ENCODE measurements at regions of chr6 and their contacts with region 1.

Region 1: DNA sequence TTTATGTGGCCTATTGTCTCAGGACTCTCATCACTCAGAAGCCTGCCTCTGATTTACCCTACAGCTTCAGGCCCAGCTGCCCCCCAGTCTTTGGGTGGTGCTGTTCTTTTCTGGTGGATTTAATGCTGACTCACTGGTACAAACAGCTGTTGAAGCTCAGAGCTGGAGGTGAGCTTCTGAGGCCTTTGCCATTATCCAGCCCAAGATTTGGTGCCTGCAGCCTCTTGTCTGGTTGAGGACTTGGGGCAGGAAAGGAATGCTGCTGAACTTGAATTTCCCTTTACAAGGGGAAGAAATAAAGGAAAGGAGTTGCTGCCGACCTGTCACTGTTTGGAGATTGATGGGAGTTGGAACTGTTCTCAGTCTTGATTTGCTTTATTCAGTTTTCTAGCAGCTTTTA is 19.8 kb downstream of the ABCF1 start:
- DNase-seq: peak; percentile 86 to 98
- H3K4me3 ChIP-seq: no peak overlapping the region
- H3K27ac ChIP-seq: peak overlapping the region; percentile 84
- H3K4me1 ChIP-seq: peaks cover 47% of the 10 kb centered on the region
- H3K27me3 ChIP-seq: no peaks in the 10 kb centered on the region
- CTCF ChIP-seq: no peak

Region 2: DNA sequence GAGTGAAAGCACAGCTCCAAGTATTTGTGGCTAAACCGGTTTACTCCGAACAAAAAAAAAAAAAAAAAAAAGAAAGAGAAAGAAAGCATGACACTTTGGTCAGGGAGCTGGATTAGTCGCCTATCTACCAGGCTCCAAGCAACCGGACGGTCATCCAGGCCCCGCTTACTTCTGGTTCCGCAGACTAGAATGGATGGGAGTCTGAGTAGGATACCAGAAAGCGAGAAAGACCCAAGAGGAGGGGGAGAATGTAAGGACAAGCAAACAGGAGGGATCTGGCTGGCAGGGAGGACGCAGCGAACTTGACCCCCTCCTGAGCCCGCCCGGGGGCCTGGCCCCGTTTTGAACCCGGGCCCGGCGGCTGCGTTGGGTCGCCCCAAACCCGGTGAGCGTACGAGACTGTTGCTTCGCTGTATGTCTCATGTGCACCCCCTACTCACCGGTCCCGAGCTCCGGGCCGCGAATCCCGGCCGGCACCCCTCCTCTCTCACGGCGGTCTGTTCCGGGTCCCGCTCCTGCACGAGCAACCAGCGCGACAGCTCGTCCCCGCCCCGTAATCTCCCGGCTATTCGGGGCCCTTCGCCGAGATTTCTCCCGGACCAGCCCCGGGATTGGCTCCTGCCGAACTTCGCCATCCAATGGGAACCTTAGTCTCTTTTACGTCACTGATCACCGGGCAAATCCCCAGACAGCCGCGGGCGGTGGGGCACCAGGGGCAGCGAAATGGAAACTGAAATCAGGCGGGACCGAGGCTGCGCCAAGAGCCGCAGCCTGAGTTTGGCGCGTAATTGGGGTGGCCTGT is 377.9 kb before region 1 on chr6 and contains the start of gene TRIM26:
- CTCF ChIA-PET with region 1: no interaction called
- POLR2A ChIA-PET with region 1: interaction called, 23 read pairs
- intact Hi-C with region 1: no loop called
- DNase-seq: peak; percentile 94 to 99
- H3K4me3 ChIP-seq: peak within 1 kb of the TSS; percentile 95
- H3K27ac ChIP-seq: peak within 1 kb of the TSS; percentile 83
- H3K4me1 ChIP-seq: peaks cover 27% of the 10 kb centered on the region
- H3K27me3 ChIP-seq: no peaks in the 10 kb centered on the region
- CTCF ChIP-seq: no peak
- total RNA-seq, gene TRIM26: 45.3 and 53.9 TPM in 2 replicates

Region 3: DNA sequence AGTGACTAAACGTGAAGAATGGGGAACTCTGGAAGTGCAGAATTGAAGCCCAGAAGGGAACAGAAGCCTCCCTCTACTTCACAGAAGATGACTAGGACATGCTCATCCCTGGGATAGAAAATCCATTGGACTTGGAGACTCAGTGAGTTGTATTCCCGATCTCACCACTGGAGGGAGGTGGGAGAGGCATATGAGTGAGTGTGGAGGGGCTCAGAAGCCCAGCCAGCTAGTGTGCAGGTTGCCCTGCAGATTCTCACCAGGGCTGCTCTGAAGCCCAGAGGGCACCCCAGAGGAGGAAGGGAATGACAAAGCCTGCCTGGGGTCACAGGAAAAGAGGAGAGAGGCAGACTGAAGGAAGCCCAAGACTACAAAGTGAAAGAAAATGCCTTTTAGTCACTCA is 143.8 kb before region 1 on chr6:
- CTCF ChIA-PET with region 1: no interaction called
- POLR2A ChIA-PET with region 1: no interaction called
- intact Hi-C with region 1: no loop called
- DNase-seq: no peak
- H3K4me3 ChIP-seq: no peak overlapping the region
- H3K27ac ChIP-seq: no peak overlapping the region
- H3K4me1 ChIP-seq: no peaks in the 10 kb centered on the region
- H3K27me3 ChIP-seq: peaks cover 96% of the 10 kb centered on the region
- CTCF ChIP-seq: peak; percentile 33; the same call in 1 of the 2 replicates

Region 4: DNA sequence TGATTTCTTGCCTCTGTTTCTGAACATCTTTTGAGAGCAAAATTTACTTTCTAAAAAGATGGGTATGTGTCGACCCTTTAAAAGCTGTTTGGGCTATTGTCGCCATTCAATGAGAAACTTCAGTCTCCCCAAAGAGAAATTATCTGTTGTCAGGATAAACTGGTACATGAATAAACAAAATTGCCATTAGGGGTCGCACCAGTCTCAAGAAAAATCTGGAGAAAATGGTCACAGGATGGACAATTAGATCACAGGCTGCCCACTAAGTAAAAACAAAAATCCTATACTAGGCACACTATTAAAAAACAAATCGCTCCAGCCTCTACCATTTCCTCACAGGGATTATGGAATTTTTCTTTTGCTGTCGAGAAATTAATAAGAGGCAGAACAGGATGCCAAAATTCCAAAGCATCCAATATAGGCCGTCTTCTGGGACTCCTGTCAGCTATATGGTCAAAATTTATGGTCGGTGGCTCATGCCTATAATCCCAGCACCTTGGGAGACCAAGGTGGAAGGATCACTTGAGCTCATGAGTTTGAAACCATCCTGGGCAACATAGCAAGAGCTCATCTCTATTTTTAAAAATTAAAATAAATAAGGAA is 107.2 kb before region 1 on chr6:
- CTCF ChIA-PET with region 1: interaction called, 5 read pairs
- POLR2A ChIA-PET with region 1: no interaction called
- intact Hi-C with region 1: loop called (anchors 2 kb)
- DNase-seq: peak; percentile 45 to 56
- H3K4me3 ChIP-seq: no peak overlapping the region
- H3K27ac ChIP-seq: no peak overlapping the region
- H3K4me1 ChIP-seq: no peaks in the 10 kb centered on the region; the same call in 1 of the 2 replicates
- H3K27me3 ChIP-seq: peaks cover 30% of the 10 kb centered on the region
- CTCF ChIP-seq: peak; percentile 74

Region 5: DNA sequence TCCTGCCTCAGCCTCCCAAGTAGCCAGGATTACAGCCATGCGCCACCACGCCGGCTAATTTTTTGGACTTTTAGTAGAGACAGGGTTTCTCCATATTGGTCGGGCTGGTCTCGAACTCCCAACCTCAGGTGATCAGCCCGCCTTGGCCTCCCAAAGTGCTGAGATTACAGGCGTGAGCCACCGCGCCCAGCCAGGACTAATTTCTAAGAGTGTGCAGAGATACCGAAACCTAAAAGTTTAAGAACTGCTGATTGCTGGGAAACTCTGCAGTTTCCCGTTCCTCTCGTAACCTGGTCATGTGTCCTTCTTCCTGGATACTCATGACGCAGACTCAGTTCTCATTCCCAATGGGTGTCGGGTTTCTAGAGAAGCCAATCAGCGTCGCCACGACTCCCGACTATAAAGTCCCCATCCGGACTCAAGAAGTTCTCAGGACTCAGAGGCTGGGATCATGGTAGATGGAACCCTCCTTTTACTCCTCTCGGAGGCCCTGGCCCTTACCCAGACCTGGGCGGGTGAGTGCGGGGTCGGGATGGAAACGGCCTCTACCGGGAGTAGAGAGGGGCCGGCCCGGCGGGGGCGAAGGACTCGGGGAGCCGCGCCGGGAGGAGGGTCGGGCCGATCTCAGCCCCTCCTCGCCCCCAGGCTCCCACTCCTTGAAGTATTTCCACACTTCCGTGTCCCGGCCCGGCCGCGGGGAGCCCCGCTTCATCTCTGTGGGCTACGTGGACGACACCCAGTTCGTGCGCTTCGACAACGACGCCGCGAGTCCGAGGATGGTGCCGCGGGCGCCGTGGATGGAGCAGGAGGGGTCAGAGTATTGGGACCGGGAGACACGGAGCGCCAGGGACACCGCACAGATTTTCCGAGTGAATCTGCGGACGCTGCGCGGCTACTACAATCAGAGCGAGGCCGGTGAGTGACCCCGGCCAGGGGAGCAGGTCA is 101.6 kb before region 1 on chr6 and contains the start of gene HLA-E:
- CTCF ChIA-PET with region 1: no interaction called
- POLR2A ChIA-PET with region 1: no interaction called
- intact Hi-C with region 1: loop called (anchors 1 kb)
- DNase-seq: peak; percentile 90 to 97
- H3K4me3 ChIP-seq: peak within 1 kb of the TSS; percentile 93
- H3K27ac ChIP-seq: peak within 1 kb of the TSS; percentile 89
- H3K4me1 ChIP-seq: peaks cover 8% of the 10 kb centered on the region
- H3K27me3 ChIP-seq: no peaks in the 10 kb centered on the region
- CTCF ChIP-seq: no peak
- total RNA-seq, gene HLA-E: 125 and 160 TPM in 2 replicates

Region 6: GRCh38 chr6:30556066-30556905 is 34.7 kb before region 1 on chr6 and contains the start of gene GNL1:
- CTCF ChIA-PET with region 1: no interaction called
- POLR2A ChIA-PET with region 1: interaction called, 6 read pairs
- intact Hi-C with region 1: loop called (anchors 1 kb)
- DNase-seq: peak; percentile 89 to 99
- H3K4me3 ChIP-seq: peak within 1 kb of the TSS; percentile 99
- H3K27ac ChIP-seq: peak within 1 kb of the TSS; percentile 79
- H3K4me1 ChIP-seq: peaks cover 17% of the 10 kb centered on the region
- H3K27me3 ChIP-seq: no peaks in the 10 kb centered on the region
- CTCF ChIP-seq: no peak
- total RNA-seq, gene GNL1: 114 and 123 TPM in 2 replicates

Region 7: GRCh38 chr6:30571075-30571768 is 19.8 kb before region 1 on chr6 and contains the start of gene ABCF1:
- CTCF ChIA-PET with region 1: interaction called, 8 read pairs
- POLR2A ChIA-PET with region 1: interaction called, 17 read pairs
- intact Hi-C with region 1: loop called (anchors 1 kb)
- DNase-seq: peak; percentile 85 to 99
- H3K4me3 ChIP-seq: peak within 1 kb of the TSS; percentile 80
- H3K27ac ChIP-seq: peak within 1 kb of the TSS; percentile 49
- H3K4me1 ChIP-seq: peaks cover 33% of the 10 kb centered on the region
- H3K27me3 ChIP-seq: no peaks in the 10 kb centered on the region
- CTCF ChIP-seq: no peak
- total RNA-seq, gene ABCF1: 64.0 and 73.7 TPM in 2 replicates

Region 8: GRCh38 chr6:31122791-31123706 is 532.1 kb after region 1 on chr6:
- CTCF ChIA-PET with region 1: no interaction called
- POLR2A ChIA-PET with region 1: interaction called, 16 read pairs
- intact Hi-C with region 1: no loop called
- DNase-seq: peak in 1 of 2 experiments; percentile 30
- H3K4me3 ChIP-seq: no peak overlapping the region
- H3K27ac ChIP-seq: no peak overlapping the region
- H3K4me1 ChIP-seq: peaks cover 15% of the 10 kb centered on the region
- H3K27me3 ChIP-seq: no peaks in the 10 kb centered on the region
- CTCF ChIP-seq: no peak

Region 9: GRCh38 chr6:31265926-31266325 is 674.9 kb after region 1 on chr6:
- CTCF ChIA-PET with region 1: no interaction called
- POLR2A ChIA-PET with region 1: no interaction called
- intact Hi-C with region 1: no loop called
- DNase-seq: no peak
- H3K4me3 ChIP-seq: no peak overlapping the region
- H3K27ac ChIP-seq: no peak overlapping the region
- H3K4me1 ChIP-seq: no peaks in the 10 kb centered on the region
- H3K27me3 ChIP-seq: no peaks in the 10 kb centered on the region
- CTCF ChIP-seq: no peak

Region 10: DNA sequence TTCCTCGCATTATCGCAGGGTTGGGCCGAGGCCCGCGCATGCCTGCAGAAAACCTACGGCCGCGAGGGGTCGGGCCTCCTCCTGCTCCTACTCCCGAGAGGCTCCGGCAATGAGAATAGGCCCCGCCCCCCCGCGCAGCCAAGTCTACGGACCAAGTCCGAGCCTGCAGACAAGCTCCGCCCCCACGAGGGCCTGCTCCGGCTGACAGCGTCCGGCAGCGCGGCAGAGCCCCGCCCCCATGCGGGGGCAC is 1604.6 kb after region 1 on chr6:
- CTCF ChIA-PET with region 1: no interaction called
- POLR2A ChIA-PET with region 1: no interaction called
- intact Hi-C with region 1: no loop called
- DNase-seq: peak; percentile 98 to 100
- H3K4me3 ChIP-seq: peak overlapping the region; percentile 96; the same call in 1 of the 2 replicates
- H3K27ac ChIP-seq: no peak overlapping the region
- H3K4me1 ChIP-seq: peaks cover 18% of the 10 kb centered on the region
- H3K27me3 ChIP-seq: peaks cover 4% of the 10 kb centered on the region
- CTCF ChIP-seq: no peak; the same call in none of the 2 replicates